ENCODE measurements at regions of chr1 and their contacts with region 1.

Region 1: DNA sequence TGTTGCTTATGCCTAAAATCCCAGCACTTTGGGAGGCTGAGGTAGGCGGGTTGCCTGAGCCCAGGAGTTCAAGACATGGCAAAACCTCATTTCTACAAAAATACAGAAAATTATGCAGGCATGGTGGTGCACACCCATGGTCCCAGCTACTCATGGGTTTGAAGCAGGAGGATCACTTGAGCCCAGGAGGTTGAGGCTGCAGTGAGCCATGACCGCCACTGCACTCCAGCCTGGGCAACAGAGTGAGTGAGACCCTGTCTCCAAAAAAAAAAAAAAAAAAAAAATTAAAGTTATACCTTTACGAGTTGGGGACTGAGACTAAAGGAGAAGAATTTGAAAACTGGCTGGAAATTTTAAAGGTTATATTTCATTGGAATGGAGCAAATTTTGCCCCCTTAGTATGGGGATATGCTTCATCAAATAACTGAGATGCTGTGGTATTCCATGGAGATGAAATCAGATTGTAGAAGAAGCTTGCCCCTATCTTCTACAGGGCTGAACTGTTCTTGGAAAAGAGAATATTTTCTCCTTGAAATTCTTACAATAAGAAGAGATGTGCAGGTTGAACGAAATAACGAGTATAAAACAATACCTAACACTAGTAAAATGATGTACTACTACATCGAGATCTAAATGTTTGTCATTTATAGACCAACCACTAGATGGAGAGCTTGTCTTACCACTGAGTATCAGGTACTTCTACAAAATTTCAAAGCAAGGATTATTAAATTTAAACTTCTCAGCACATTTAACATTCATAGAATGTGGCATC is 34.9 kb upstream of the SCYL3 start:
- DNase-seq: peak; percentile 37
- H3K4me3 Mint-ChIP-seq: no peak overlapping the region
- H3K27ac Mint-ChIP-seq: no peak overlapping the region
- H3K4me1 Mint-ChIP-seq: peaks cover 6% of the 10 kb centered on the region
- H3K27me3 Mint-ChIP-seq: peaks cover 7% of the 10 kb centered on the region

Region 2: GRCh38 chr1:170175056-170175455 is 246.4 kb after region 1 on chr1:
- intact Hi-C with region 1: no loop called
- DNase-seq: no peak
- H3K4me3 Mint-ChIP-seq: no peak overlapping the region
- H3K27ac Mint-ChIP-seq: no peak overlapping the region
- H3K4me1 Mint-ChIP-seq: no peaks in the 10 kb centered on the region
- H3K27me3 Mint-ChIP-seq: peaks cover 2% of the 10 kb centered on the region

Region 3: GRCh38 chr1:170531758-170532657 is 603.4 kb after region 1 on chr1 and contains the start of gene GORAB:
- intact Hi-C with region 1: loop called (anchors 5 kb)
- DNase-seq: peak; percentile 96
- H3K4me3 Mint-ChIP-seq: no peak within 1 kb of the TSS
- H3K27ac Mint-ChIP-seq: no peak within 1 kb of the TSS
- H3K4me1 Mint-ChIP-seq: peaks cover 5% of the 10 kb centered on the region
- H3K27me3 Mint-ChIP-seq: peaks cover 13% of the 10 kb centered on the region
- total RNA-seq, gene GORAB: 12.8 and 13.0 TPM in 2 replicates

Region 4: GRCh38 chr1:170664828-170665612 is 736.4 kb after region 1 on chr1:
- intact Hi-C with region 1: loop called (anchors 10 kb)
- DNase-seq: no peak
- H3K4me3 Mint-ChIP-seq: no peak overlapping the region
- H3K27ac Mint-ChIP-seq: no peak overlapping the region
- H3K4me1 Mint-ChIP-seq: peaks cover 13% of the 10 kb centered on the region
- H3K27me3 Mint-ChIP-seq: peaks cover 89% of the 10 kb centered on the region

Region 5: DNA sequence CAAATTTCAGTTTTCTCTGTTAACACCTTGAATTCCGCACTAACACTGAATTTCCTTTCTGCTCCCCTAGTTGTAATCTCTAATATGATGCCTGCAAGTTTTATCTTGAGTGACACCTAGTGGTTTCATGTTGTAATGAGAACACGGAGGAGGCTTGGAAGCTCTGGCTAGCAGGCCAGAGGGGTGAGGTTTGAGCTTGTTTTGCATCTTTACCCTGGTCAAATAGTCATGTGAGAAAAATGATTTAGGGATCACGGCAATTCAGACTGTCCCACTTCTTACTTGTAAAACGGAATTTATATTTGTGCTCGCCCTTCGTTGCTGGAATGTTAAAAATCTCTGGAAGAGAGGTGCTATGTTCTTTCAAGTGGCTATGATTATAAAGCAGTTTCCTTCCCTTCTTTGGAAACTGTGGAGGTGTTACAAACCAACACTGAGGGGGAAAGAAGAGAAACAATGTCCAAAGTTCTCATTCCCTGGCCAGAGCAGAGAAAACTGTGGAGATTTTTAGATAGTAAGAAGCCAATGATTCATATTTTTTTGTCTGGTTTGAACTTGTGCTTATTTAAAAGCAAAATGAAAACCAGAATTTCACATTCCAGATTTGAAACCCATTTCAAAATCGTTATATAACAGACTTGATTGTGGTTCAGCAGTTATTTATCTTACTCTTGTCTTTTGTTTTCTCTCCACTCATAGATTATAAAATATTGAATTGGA is 1001.4 kb after region 1 on chr1:
- intact Hi-C with region 1: loop called (anchors 1 kb)
- DNase-seq: peak; percentile 73
- H3K4me3 Mint-ChIP-seq: no peak overlapping the region
- H3K27ac Mint-ChIP-seq: no peak overlapping the region
- H3K4me1 Mint-ChIP-seq: no peaks in the 10 kb centered on the region
- H3K27me3 Mint-ChIP-seq: peaks cover 4% of the 10 kb centered on the region

Region 6: DNA sequence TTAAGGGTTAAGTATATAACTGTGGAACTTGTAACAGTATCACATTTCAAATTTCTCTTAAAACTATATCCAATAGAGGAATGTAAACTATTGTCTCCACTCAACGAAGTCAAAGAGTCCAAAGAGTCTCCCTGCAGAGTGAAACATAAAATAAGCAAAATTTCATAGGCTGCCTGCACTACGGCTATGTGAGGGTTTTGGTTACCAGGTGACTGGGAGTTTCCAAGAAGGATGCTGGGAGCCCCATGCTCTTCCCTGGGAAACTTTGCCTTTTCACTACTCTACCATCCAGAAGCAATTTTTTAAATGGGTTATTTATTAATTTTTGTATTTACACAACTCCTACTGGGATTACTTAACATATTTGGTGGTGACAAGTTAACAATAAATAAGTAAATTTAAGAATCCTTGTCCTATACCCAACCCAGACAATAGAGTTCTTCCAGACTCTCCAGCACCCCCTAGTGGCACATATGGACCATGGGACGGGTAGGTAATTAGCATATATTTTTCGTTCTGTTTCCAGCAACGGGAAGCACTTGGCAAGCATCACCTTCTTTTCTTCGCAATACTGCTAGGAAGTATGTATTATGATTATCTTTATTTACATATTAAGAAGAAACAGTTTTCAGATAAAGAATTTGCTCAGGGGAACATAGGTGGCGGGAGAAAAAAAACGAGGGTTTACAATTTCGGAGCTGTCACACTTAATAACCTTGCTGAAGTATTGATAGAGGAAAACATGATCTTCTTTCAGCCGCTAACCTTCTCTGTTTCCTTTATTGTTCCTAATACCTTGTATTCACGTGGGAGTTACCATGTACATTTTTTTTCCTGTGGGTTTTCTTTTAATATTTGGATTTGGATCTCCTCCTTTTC is 1260.0 kb after region 1 on chr1:
- intact Hi-C with region 1: loop called (anchors 5 kb)
- DNase-seq: peak; percentile 79
- H3K4me3 Mint-ChIP-seq: no peak overlapping the region
- H3K27ac Mint-ChIP-seq: no peak overlapping the region
- H3K4me1 Mint-ChIP-seq: no peaks in the 10 kb centered on the region
- H3K27me3 Mint-ChIP-seq: peaks cover 11% of the 10 kb centered on the region